PC-3 (cell line): ENCODE measurements at regions of chr11 and their contacts with region 1.

Region 1: GRCh38 chr11:122085264-122085663 is 30.8 kb downstream of the BLID start:
- DNase-seq: peak; percentile 71
- ATAC-seq: peak; percentile 17
- H3K4me3 ChIP-seq: no peak overlapping the region
- H3K27ac ChIP-seq: no peak overlapping the region
- H3K4me1 ChIP-seq: peaks cover 4% of the 10 kb centered on the region; the same call in 1 of the 2 replicates
- H3K27me3 ChIP-seq: no peaks in the 10 kb centered on the region
- CTCF ChIP-seq: no peak

Region 2: DNA sequence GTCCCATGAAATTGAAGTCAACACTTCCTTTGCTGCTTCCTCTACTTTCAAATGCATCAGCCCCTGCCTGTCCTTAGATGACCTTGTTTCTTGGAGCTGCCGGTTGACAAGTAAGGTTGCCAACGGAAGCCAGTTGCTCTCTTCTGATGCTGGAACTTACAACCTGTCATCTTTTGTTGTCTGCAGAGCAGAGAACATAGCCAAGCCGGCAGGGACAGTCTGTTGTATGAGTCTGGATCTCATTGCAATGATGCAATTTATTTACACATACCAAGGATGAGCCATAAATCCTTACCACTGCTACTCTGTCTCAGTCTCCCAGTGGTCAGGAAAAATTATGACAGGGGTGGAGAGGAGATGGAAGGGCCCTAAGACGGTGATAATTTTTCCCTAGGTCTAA is 120.7 kb before region 1 on chr11:
- CTCF ChIA-PET with region 1: no interaction called
- POLR2A ChIA-PET with region 1: no interaction called
- intact Hi-C with region 1: loop called (anchors 10 kb)
- DNase-seq: peak; percentile 88
- ATAC-seq: peak; percentile 93
- H3K4me3 ChIP-seq: no peak overlapping the region; the same call in 1 of the 2 replicates
- H3K27ac ChIP-seq: peak overlapping the region; percentile 60
- H3K4me1 ChIP-seq: peaks cover 19% of the 10 kb centered on the region
- H3K27me3 ChIP-seq: no peaks in the 10 kb centered on the region
- CTCF ChIP-seq: peak; percentile 25; the same call in 1 of the 2 replicates

Region 3: DNA sequence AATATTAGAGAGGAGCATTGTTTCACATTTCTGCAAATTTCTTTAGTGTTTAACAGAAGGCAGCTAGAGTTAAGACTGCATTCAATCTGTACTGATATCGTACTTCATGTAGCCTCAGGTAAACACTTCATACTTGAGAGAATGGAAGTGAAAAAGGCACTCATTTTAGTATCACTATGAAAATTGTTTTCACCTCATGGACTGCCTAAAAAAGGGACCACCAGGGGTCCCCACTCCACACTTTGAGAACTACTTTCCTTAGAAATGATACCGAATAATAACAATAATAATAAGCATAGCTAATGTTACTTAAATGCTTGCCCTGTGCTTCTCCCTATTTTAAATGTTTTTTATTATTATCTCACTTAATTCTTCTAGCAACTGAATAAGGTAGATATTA is 64.4 kb before region 1 on chr11:
- CTCF ChIA-PET with region 1: no interaction called
- POLR2A ChIA-PET with region 1: no interaction called
- intact Hi-C with region 1: loop called (anchors 5 kb)
- DNase-seq: peak; percentile 46
- ATAC-seq: peak; percentile 18; the same call in 1 of the 2 replicates
- H3K4me3 ChIP-seq: no peak overlapping the region
- H3K27ac ChIP-seq: no peak overlapping the region
- H3K4me1 ChIP-seq: 0 out of 2 replicates have a peak, but pooled peaks cover 7% of the 10 kb centered on the region
- H3K27me3 ChIP-seq: no peaks in the 10 kb centered on the region
- CTCF ChIP-seq: peak; percentile 70

Region 4: DNA sequence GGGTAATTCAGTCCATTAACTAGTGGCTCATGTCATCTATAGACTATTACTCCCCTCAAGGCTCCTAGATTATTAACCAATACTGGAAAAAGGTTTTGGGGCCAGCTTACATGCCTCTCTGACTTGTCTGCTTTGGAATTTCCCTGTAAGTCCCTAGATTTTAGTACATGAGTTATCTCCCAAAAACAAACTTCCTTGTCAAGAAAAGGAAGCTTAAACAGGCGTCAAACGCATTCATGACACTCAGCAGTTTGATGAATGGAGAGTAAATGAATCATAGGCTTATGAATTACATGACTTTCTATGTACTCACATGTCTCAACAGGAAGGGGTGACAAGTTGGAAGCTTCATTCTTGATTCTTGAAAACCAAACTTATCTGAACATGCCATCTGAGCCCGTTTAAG is 40.1 kb before region 1 on chr11:
- CTCF ChIA-PET with region 1: no interaction called
- POLR2A ChIA-PET with region 1: no interaction called
- intact Hi-C with region 1: loop called (anchors 5 kb)
- DNase-seq: peak; percentile 92
- ATAC-seq: peak; percentile 76
- H3K4me3 ChIP-seq: no peak overlapping the region
- H3K27ac ChIP-seq: peak overlapping the region; percentile 80
- H3K4me1 ChIP-seq: peaks cover 41% of the 10 kb centered on the region
- H3K27me3 ChIP-seq: no peaks in the 10 kb centered on the region
- CTCF ChIP-seq: no peak

Region 5: GRCh38 chr11:122059565-122059964 is 25.7 kb before region 1 on chr11:
- CTCF ChIA-PET with region 1: no interaction called
- POLR2A ChIA-PET with region 1: interaction called, 10 read pairs
- intact Hi-C with region 1: no loop called
- DNase-seq: no peak
- ATAC-seq: no peak
- H3K4me3 ChIP-seq: no peak overlapping the region; the same call in 1 of the 2 replicates
- H3K27ac ChIP-seq: no peak overlapping the region
- H3K4me1 ChIP-seq: no peaks in the 10 kb centered on the region
- H3K27me3 ChIP-seq: no peaks in the 10 kb centered on the region
- CTCF ChIP-seq: no peak